Activated CD4-positive, alpha-beta T cell treated with anti-CD3 and anti-CD28 coated beads for 36 hours (primary cell): ENCODE measurements at regions of chr1 and their contacts with region 1.

Region 1: GRCh38 chr1:89670163-89670562 is 37.2 kb downstream of the LRRC8C start:
- DNase-seq: no peak
- ATAC-seq: peak; percentile 65
- H3K4me3 Mint-ChIP-seq: peak overlapping the region; percentile 36
- H3K27ac Mint-ChIP-seq: peak overlapping the region; percentile 88
- H3K4me1 Mint-ChIP-seq: peaks cover 93% of the 10 kb centered on the region
- H3K27me3 Mint-ChIP-seq: no peaks in the 10 kb centered on the region

Region 2: DNA sequence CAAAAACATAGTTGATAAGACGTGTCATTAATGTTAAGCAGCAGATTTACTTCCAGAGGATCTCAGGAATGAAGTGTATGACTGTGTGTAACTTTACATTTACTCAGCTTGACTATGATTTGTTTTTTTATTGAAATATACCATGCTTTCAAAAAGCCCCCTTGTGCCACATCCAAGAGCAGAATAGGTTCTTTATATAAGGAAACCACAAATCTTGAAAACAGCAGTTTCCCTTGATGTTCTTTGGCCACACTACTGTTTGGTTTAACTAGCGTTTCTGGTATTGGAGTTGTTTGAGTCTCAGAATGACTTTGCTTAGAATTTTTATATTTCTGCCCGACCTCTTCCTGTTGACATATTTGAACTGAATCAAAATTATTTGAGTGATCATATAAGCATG is 12.3 kb before region 1 on chr1:
- CTCF ChIA-PET with region 1: interaction called, 17 read pairs
- POLR2A ChIA-PET with region 1: no interaction called
- intact Hi-C with region 1: no loop called
- DNase-seq: no peak
- ATAC-seq: peak; percentile 56
- H3K4me3 Mint-ChIP-seq: no peak overlapping the region
- H3K27ac Mint-ChIP-seq: peak overlapping the region; percentile 88
- H3K4me1 Mint-ChIP-seq: peaks cover 94% of the 10 kb centered on the region
- H3K27me3 Mint-ChIP-seq: no peaks in the 10 kb centered on the region

Region 3: DNA sequence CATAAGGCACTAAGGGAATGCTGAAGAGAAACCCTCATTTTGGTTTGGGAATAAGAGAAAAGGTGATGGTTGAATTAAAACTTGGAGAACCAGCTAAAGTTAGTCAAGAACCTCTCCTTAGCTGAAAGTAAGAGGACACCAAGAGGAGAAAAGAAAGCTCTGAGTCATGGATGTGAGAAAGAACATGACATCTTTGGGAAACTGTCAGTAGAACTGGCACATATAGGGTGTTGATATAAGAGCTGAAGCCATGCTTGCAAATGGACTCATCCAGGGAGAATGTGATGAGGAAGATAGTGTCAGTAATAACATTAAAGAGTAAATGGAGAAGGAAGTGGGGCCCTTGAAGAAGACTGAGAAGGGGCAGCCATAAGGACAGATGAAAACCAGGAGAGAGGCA is 17.1 kb after region 1 on chr1:
- CTCF ChIA-PET with region 1: interaction called, 17 read pairs
- POLR2A ChIA-PET with region 1: interaction called, 3 read pairs
- intact Hi-C with region 1: loop called in 1 of 2 experiments (anchors 2 kb)
- DNase-seq: no peak
- ATAC-seq: peak; percentile 70
- H3K4me3 Mint-ChIP-seq: no peak overlapping the region
- H3K27ac Mint-ChIP-seq: peak overlapping the region; percentile 91
- H3K4me1 Mint-ChIP-seq: peaks cover 74% of the 10 kb centered on the region
- H3K27me3 Mint-ChIP-seq: no peaks in the 10 kb centered on the region

Region 4: DNA sequence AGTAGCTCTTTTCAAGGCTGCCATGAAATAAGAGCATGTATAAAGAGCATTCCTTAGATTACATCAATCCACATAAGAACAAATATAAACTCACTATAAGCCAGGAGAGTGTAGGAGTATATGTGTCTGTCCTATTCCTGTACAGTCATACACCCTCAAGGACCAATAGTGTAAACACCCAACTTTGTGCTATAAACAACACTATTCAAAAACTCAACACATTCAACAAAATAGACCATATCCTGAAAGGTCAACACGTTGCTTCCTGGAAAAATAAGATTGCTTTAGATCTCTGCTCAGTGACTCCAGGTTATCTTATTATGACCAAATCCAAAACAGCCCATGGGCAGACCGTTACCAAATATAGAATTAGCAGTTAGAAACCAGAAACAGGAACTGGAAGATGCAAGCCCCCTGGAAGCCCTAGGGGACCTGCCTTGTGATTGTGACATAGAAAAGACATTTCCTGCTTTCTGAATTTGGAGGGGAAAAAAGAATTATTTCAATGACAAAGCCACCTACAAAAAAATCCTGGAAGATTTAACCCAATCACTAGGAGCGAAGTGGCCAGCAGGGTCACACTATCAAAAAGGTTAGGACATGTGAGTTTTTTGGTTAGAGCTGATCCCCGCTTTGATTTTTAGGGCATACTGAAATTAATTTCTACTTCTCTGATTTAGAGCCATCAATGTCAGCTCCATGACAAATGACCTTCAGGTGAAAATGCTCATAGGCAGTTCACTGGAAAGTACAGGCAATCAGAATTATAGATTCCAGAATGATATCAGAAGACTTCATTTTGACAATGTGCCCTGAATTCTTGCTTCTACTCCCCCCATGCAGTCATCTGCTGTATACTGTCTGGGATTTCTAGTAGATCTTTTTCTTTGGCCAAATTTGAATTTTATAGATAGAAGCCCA is 22.7 kb after region 1 on chr1:
- CTCF ChIA-PET with region 1: interaction called, 17 read pairs
- POLR2A ChIA-PET with region 1: no interaction called
- intact Hi-C with region 1: no loop called
- DNase-seq: no peak
- ATAC-seq: no peak
- H3K4me3 Mint-ChIP-seq: no peak overlapping the region
- H3K27ac Mint-ChIP-seq: peak overlapping the region; percentile 74
- H3K4me1 Mint-ChIP-seq: peaks cover 94% of the 10 kb centered on the region
- H3K27me3 Mint-ChIP-seq: no peaks in the 10 kb centered on the region